ENCODE measurements at regions of chr6 and their contacts with region 1.

Region 1: GRCh38 chr6:130047088-130047995 is 29.0 kb downstream of the L3MBTL3 start:
- DNase-seq: no peak
- H3K4me3 ChIP-seq: no peak overlapping the region
- H3K27ac ChIP-seq: no peak overlapping the region
- H3K4me1 ChIP-seq: no peaks in the 10 kb centered on the region
- H3K27me3 ChIP-seq: no peaks in the 10 kb centered on the region
- CTCF ChIP-seq: peak; percentile 61

Region 2: DNA sequence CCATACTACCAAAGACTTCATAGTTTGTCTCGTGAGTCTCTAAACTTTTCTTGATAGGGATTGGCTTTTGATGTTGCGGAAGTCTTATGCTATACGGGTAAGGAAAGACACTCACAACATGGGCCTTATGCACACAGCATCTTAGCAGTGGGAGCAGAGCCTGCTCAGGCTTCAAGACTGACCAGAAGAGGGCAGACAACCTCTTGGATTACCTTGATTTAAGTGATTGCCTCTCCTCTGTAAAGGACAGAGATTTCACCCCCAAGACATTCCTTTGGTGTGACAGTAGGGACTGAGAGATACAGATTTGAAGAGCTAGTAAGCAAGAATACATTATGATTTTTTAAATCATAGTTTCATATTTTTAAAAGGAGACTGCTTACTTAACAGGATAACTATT is 246.5 kb after region 1 on chr6:
- CTCF ChIA-PET with region 1: no interaction called
- POLR2A ChIA-PET with region 1: no interaction called
- intact Hi-C with region 1: loop called (anchors 10 kb)
- DNase-seq: peak in 1 of 2 experiments; percentile 15
- H3K4me3 ChIP-seq: no peak overlapping the region
- H3K27ac ChIP-seq: no peak overlapping the region
- H3K4me1 ChIP-seq: no peaks in the 10 kb centered on the region
- H3K27me3 ChIP-seq: no peaks in the 10 kb centered on the region
- CTCF ChIP-seq: peak; percentile 64

Region 3: GRCh38 chr6:130697995-130698535 is 650.7 kb after region 1 on chr6:
- CTCF ChIA-PET with region 1: interaction called, 24 read pairs
- POLR2A ChIA-PET with region 1: no interaction called
- intact Hi-C with region 1: loop called (anchors 10 kb)
- DNase-seq: peak in 1 of 2 experiments; percentile 34
- H3K4me3 ChIP-seq: no peak overlapping the region
- H3K27ac ChIP-seq: no peak overlapping the region
- H3K4me1 ChIP-seq: no peaks in the 10 kb centered on the region
- H3K27me3 ChIP-seq: peaks cover 8% of the 10 kb centered on the region; the same call in 1 of the 2 replicates
- CTCF ChIP-seq: peak; percentile 91

Region 4: DNA sequence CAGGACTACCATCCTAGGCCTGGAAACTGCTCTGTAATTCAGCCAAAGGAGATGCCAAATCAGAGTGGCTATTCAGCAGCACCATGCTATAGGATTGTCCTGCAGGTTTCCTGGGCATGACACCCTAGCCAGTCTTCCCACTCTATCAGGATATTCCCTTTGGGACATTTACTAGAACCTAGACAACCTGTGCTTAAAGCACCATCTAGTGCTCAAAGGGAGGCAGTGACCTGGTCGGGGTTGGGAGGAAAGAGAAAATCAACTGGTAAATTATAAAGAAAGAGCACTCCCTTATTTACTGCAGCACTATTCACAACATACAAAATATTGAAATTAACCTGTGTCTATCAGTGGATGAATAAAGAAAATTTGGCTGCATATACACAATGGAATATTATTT is 712.7 kb after region 1 on chr6:
- CTCF ChIA-PET with region 1: no interaction called
- POLR2A ChIA-PET with region 1: no interaction called
- intact Hi-C with region 1: loop called (anchors 5 kb)
- DNase-seq: peak in 1 of 2 experiments; percentile 7
- H3K4me3 ChIP-seq: no peak overlapping the region
- H3K27ac ChIP-seq: no peak overlapping the region
- H3K4me1 ChIP-seq: no peaks in the 10 kb centered on the region
- H3K27me3 ChIP-seq: no peaks in the 10 kb centered on the region
- CTCF ChIP-seq: peak; percentile 77

Region 5: DNA sequence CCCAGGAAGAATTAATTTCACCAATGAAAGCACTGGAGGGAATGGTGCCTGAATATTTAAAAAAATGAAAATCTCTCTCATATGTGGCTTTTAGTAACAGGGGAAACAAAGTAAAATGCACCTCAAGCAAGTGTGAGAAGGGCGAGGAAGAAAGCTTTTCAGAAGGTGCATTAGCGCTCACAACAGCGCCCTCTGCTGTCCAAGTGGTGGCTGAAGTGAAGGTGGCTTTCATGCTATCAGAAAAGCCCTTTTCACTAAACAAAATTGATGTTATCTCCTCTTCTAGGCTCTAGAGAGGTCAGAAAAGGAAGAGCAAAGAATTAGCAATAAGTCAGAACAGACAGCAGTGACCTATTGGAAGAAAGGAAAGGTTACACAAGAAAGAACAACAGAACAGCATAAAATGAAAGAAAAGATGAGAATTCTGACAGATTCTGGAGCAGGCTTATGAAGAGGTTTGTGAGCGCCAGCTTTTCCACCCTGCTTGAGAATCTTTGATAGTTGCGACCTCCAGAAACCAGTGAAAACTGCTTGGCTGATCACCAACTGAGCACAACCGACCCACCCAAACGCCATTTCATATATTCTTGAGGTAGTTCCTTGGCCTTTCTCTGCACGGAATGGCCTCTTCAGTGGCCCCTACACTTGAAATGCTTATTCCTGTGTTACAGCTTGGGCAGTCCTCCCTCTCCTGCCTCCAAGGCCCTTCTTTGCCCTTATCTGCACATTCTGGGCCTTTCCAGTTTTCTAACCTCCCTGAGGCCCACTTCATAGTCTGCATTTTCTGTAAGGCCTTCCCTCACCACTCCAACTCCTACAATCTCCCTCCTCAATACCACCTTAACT is 825.1 kb after region 1 on chr6:
- CTCF ChIA-PET with region 1: no interaction called
- POLR2A ChIA-PET with region 1: no interaction called
- intact Hi-C with region 1: loop called (anchors 10 kb)
- DNase-seq: peak in 1 of 2 experiments; percentile 49
- H3K4me3 ChIP-seq: no peak overlapping the region
- H3K27ac ChIP-seq: no peak overlapping the region
- H3K4me1 ChIP-seq: no peaks in the 10 kb centered on the region
- H3K27me3 ChIP-seq: no peaks in the 10 kb centered on the region
- CTCF ChIP-seq: peak; percentile 99

Measured in PC-9 (cell line).